HEK293 (cell line): ENCODE measurements at regions of chr5 and their contacts with region 1.

Region 1: GRCh38 chr5:10264604-10265003 is 14.5 kb downstream of the CCT5 start:
- H3K4me3 ChIP-seq: no peak overlapping the region
- H3K27ac ChIP-seq: no peak overlapping the region
- H3K4me1 ChIP-seq: peaks cover 3% of the 10 kb centered on the region; the same call in 1 of the 2 replicates
- CTCF ChIP-seq: no peak

Region 2: DNA sequence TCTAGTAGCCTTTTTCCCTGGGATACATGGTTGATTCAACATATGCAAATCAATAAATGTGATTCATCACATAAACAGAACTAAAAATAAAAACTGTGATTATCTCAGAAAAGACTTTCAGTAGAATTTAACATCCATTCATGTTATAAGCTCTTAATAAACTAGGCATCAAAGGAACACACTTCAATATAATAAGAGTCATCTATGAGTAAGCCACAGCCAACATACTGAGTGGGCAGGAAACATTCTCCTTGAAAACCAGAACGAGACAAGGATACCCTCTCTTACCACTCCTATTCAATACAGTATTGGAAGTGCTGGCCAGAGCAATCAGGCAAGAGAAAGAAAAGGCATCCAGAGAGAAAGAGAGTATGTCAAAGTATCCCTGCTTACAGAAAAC is 254.8 kb before region 1 on chr5:
- CTCF ChIA-PET with region 1: no interaction called
- POLR2A ChIA-PET with region 1: no interaction called
- H3K4me3 ChIP-seq: no peak overlapping the region
- H3K27ac ChIP-seq: no peak overlapping the region
- H3K4me1 ChIP-seq: no peaks in the 10 kb centered on the region
- CTCF ChIP-seq: no peak

Region 3: DNA sequence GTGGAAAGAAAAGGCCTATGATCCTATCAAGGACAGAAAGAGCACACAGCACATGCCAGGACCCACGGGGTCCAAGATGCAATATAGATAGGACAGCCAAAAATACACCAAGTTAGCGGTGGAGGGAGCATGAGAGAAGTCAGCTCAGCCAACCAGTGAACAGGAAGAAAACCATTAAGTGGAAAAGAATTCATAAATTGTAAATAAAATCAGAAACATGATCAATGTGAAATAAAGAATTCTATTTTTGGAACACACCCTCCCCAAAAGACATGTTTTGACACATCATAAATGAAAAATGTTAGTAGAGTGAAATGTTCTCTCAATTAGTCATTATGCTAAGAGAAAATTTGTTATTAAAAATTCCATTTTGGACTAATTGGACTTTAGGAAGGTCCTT is 50.6 kb before region 1 on chr5:
- CTCF ChIA-PET with region 1: no interaction called
- POLR2A ChIA-PET with region 1: no interaction called
- H3K4me3 ChIP-seq: no peak overlapping the region
- H3K27ac ChIP-seq: no peak overlapping the region
- H3K4me1 ChIP-seq: no peaks in the 10 kb centered on the region
- CTCF ChIP-seq: no peak

Region 4: DNA sequence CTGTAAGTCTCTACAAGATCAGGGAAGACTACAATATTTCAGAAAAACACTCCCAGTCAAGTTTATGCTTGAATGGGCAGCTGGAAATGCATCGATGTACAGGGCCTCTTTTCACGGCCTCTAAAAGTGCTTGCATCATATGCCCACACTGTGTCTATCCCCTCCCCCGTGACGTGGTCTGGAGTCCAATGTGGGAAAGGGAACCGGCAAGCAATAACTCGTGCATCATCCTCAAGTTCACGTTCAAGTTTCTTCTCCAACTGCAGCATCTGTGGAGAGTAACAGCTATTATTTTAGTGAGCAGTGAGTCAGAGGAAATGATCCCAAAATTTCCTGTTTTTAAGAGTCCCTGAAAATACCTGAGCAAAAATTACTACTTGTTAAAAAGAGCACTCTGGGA is 37.2 kb before region 1 on chr5:
- CTCF ChIA-PET with region 1: no interaction called
- POLR2A ChIA-PET with region 1: no interaction called
- H3K4me3 ChIP-seq: no peak overlapping the region
- H3K27ac ChIP-seq: no peak overlapping the region
- H3K4me1 ChIP-seq: no peaks in the 10 kb centered on the region
- CTCF ChIP-seq: no peak

Region 5: DNA sequence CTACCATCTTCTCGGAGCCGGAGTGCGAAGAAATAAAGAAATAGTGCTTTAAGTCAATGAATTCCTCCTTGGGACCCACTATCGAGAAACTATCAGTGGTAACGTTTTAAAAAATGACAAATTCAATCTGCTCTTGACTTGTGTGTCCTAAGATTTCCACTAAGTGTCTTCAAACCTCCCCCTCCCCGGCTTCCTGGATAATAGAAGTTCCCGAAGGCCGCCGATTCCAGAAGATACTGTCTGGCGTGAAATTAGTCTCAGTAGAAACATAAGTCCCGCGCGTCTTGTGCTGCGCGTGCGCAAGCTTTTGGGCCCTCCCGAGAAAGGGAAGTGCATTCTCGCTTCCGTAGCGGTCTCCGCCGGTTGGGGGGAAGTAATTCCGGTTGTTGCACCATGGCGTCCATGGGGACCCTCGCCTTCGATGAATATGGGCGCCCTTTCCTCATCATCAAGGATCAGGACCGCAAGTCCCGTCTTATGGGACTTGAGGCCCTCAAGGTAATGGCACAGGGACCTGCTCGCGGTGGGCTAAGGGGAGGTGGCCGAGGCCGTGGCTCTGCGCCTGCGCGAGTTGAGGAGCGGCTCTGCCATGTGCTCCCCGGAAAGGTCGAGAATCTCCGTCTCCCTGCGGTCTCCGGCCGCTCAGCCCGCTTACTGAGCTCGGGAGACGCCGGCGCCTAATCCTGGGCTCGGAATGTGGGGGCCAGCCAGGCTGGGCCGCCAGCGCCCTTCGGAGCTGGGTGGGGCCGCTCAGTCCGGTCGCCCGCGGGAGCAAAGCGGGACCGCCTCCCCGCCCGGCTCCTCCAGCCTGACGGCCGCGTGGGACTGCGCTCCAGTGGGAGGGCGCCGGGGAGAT is 14.4 kb before region 1 on chr5 and contains the start of gene CCT5:
- CTCF ChIA-PET with region 1: interaction called, 5 read pairs
- POLR2A ChIA-PET with region 1: interaction called, 14 read pairs
- H3K4me3 ChIP-seq: peak within 1 kb of the TSS; percentile 96
- H3K27ac ChIP-seq: peak within 1 kb of the TSS; percentile 90
- H3K4me1 ChIP-seq: peaks cover 17% of the 10 kb centered on the region
- CTCF ChIP-seq: 0 out of 2 replicates have a peak, but pooled peaks have one; percentile 44

Region 6: DNA sequence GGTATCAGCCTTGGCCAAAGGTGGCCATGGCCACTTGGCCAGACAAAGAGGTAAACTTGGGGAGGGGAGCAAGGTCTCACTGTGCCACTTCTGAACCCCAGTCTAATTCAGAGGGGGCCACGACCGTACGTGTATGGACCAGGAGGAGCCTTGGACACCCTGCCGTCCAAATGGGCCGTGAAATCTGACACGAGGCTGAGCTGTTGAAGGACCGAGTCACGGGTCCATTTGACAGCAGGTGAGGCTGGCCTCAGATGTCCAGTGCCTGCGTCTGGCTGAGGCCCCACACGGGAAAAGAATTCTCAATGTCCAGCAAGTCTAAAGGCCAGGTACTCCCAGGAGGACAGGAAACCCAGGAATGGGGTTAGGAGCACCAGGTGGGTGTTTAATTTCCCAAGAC is 25.4 kb after region 1 on chr5:
- CTCF ChIA-PET with region 1: no interaction called
- POLR2A ChIA-PET with region 1: no interaction called
- H3K4me3 ChIP-seq: no peak overlapping the region
- H3K27ac ChIP-seq: no peak overlapping the region
- H3K4me1 ChIP-seq: peaks cover 19% of the 10 kb centered on the region
- CTCF ChIP-seq: no peak